Psoas muscle (tissue), 8 donors: ENCODE measurements at regions of chr14 and their contacts with region 1.

Region 1: DNA sequence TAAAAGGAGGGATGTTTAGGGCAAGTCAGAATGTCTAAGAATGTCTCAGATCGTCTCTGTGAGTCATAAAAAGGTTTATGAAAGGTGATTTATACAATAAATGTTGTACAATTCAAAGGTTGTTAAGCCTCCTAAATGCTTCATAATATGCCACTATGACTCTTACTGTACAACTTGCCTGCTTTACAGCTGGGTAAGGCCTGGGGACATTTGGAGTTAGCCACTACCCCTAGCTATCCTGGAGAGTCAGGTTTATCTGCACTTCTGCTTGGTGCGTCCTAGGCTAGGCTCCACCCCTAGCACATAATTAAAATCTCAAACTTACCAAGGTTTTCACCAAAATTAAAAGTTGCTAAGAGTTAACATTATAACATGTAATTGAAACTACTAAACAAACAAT is 927.3 kb downstream of the FSCB start:
- DNase-seq: no peak
- ATAC-seq: no peak
- H3K4me3 ChIP-seq: no peak overlapping the region
- H3K27ac ChIP-seq: no peak overlapping the region
- H3K4me1 ChIP-seq: no peaks in the 10 kb centered on the region
- H3K27me3 ChIP-seq: no peaks in the 10 kb centered on the region
- CTCF ChIP-seq: no peak

Region 2: GRCh38 chr14:43475762-43476161 is 104.0 kb before region 1 on chr14:
- intact Hi-C with region 1: no loop called
- DNase-seq: no peak
- ATAC-seq: no peak
- H3K4me3 ChIP-seq: no peak overlapping the region
- H3K27ac ChIP-seq: no peak overlapping the region
- H3K4me1 ChIP-seq: no peaks in the 10 kb centered on the region
- H3K27me3 ChIP-seq: no peaks in the 10 kb centered on the region
- CTCF ChIP-seq: no peak

Region 3: GRCh38 chr14:43625294-43625693 is 45.6 kb after region 1 on chr14:
- intact Hi-C with region 1: loop called in 1 of 2 experiments (anchors 1 kb)
- DNase-seq: no peak
- ATAC-seq: no peak
- H3K4me3 ChIP-seq: no peak overlapping the region
- H3K27ac ChIP-seq: no peak overlapping the region
- H3K4me1 ChIP-seq: no peaks in the 10 kb centered on the region
- H3K27me3 ChIP-seq: no peaks in the 10 kb centered on the region
- CTCF ChIP-seq: no peak